ENCODE measurements at regions of chr4 and their contacts with region 1.

Region 1: DNA sequence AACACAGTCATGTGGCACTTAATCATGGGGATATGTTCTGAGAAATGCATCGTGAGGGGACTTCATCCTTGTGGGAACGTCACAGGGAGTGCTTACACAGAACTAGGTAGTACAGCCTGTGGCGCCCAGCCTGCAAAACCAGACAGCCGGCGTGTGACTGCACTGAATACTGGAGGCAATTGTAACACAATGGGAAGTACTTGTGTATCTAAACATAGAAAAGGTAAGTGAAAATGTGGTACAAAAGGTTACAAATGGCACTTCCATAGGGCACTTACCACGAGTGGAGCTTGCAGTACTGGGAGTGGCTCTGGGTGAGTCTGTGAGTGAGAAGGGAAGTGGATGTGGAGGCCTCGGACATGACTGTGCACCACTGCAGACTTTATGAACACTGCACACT is 5.2 kb downstream of the TLR3 start:
- DNase-seq: peak in 1 of 2 donors; percentile 77
- H3K4me3 ChIP-seq: no peak overlapping the region
- H3K27ac ChIP-seq: no peak overlapping the region
- H3K4me1 ChIP-seq: peaks cover 10% of the 10 kb centered on the region
- H3K27me3 ChIP-seq: no peaks in the 10 kb centered on the region
- CTCF ChIP-seq: no peak
- POLR2A ChIP-seq: no peak

Region 2: GRCh38 chr4:184364100-184364921 is 1709.9 kb before region 1 on chr4:
- intact Hi-C with region 1: no loop called
- DNase-seq: no peak
- H3K4me3 ChIP-seq: no peak overlapping the region
- H3K27ac ChIP-seq: no peak overlapping the region
- H3K4me1 ChIP-seq: peaks cover 7% of the 10 kb centered on the region
- H3K27me3 ChIP-seq: no peaks in the 10 kb centered on the region
- CTCF ChIP-seq: no peak
- POLR2A ChIP-seq: no peak

Region 3: DNA sequence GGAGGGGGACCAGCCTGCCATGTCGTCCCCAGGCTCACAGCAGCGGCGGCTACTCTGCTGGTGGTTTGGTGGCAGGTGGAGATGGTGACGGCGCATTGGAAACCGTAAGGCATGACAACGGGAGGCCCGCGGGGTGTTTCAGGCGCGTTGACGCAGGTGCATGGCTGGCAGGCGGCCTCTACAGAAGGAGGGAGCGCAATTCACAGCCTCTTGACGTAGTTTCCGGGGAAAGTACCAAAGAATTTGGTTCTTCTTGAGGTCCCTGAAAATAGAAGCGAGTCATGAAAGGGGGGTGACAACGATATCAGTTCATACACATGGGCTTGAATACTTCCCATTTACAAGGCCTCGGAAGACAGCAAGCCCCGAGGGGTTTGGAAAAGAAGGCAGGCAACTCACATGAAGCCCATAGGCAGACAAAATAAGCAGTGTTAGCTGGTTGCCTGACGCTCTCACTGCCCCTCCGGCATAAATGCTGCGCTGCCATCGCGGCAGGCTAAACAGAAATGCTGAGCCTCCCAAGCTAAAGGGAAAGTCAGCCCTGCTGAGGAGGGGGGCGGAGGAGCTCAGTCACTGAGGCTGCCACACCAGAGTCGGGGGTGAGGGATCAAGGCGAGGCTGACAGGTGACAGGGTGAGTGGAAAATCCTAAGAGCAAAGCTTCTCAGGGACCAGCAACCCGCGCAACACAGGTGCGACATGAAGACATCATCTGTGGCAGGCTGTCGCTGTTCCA is 486.6 kb before region 1 on chr4:
- intact Hi-C with region 1: no loop called
- DNase-seq: no peak
- H3K4me3 ChIP-seq: no peak overlapping the region
- H3K27ac ChIP-seq: no peak overlapping the region
- H3K4me1 ChIP-seq: no peaks in the 10 kb centered on the region
- H3K27me3 ChIP-seq: no peaks in the 10 kb centered on the region
- CTCF ChIP-seq: no peak
- POLR2A ChIP-seq: no peak

Region 4: DNA sequence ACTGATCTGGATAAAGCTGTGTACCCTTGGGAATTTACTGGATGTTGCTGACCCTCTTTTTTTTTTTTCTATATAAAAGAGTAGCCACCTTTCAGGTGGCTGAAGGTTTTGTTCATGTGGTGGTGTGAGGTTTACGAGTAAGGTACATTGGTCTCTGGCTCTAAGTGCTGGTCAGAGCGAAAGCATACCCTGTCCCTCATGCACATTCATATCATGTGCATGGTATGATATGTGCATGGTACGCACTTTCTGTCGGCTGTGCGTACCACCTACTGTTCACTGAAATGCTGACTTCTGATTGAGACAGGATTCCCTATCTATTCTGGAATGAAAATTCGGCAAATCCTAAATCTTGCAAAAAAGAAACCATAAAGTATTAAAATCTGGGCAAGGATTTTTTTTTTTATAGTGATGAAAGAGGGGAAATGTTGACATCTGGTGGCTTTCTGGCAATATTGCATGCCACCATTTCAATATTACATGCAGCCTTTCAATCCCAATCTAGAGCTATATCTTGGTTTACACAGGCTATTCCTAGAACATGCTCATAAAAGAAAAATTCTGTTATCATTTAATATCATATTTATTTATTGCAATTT is 63.1 kb after region 1 on chr4:
- intact Hi-C with region 1: loop called (anchors 10 kb)
- DNase-seq: no peak
- H3K4me3 ChIP-seq: peak overlapping the region in 1 of 2 donors; percentile 18
- H3K27ac ChIP-seq: no peak overlapping the region
- H3K4me1 ChIP-seq: no peaks in the 10 kb centered on the region
- H3K27me3 ChIP-seq: no peaks in the 10 kb centered on the region
- CTCF ChIP-seq: peak; percentile 26 to 52 (median 38)
- POLR2A ChIP-seq: no peak

Region 5: GRCh38 chr4:186621959-186622553 is 547.9 kb after region 1 on chr4:
- intact Hi-C with region 1: no loop called
- DNase-seq: no peak
- H3K4me3 ChIP-seq: no peak overlapping the region
- H3K27ac ChIP-seq: no peak overlapping the region
- H3K4me1 ChIP-seq: peaks cover 4% of the 10 kb centered on the region
- H3K27me3 ChIP-seq: no peaks in the 10 kb centered on the region
- CTCF ChIP-seq: no peak
- POLR2A ChIP-seq: no peak

Region 6: DNA sequence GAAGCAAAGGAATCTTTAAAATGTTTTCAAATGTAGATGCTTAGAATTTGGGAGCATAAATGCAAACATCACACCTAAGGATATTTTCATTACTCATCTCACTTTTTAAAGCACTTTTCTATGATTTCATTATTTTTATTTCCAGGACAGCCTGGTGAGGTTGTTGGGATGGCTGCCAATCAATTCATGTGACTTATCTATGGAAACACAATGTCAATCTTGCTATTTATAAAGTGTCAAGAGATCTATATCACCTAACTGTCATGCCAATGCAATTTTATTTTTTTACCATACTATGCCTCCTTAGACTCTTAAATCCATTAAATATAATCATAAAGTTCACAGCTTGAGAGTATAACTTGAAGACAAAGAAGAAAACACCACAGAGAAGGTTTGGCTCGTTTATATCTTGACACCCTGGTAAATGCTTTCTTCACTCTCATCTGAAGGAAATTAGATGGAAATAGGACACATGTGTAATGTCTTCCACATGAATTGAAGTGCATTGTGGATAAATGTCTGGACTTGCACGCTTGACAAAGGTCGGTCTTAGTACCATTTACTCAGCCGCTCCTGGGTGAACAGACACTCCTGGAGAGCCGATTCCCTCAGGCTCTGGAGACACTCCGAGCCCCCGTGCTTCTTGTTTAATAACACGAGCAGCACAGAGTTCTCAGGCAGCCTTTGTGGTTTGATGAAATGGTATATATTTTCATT is 1075.2 kb after region 1 on chr4:
- intact Hi-C with region 1: no loop called
- DNase-seq: no peak
- H3K4me3 ChIP-seq: no peak overlapping the region
- H3K27ac ChIP-seq: no peak overlapping the region
- H3K4me1 ChIP-seq: no peaks in the 10 kb centered on the region
- H3K27me3 ChIP-seq: no peaks in the 10 kb centered on the region
- CTCF ChIP-seq: no peak
- POLR2A ChIP-seq: no peak

Measured in vagina (tissue), 2 donors.